Psoas muscle (tissue), 8 donors: ENCODE measurements at regions of chr1 and their contacts with region 1.

Region 1: DNA sequence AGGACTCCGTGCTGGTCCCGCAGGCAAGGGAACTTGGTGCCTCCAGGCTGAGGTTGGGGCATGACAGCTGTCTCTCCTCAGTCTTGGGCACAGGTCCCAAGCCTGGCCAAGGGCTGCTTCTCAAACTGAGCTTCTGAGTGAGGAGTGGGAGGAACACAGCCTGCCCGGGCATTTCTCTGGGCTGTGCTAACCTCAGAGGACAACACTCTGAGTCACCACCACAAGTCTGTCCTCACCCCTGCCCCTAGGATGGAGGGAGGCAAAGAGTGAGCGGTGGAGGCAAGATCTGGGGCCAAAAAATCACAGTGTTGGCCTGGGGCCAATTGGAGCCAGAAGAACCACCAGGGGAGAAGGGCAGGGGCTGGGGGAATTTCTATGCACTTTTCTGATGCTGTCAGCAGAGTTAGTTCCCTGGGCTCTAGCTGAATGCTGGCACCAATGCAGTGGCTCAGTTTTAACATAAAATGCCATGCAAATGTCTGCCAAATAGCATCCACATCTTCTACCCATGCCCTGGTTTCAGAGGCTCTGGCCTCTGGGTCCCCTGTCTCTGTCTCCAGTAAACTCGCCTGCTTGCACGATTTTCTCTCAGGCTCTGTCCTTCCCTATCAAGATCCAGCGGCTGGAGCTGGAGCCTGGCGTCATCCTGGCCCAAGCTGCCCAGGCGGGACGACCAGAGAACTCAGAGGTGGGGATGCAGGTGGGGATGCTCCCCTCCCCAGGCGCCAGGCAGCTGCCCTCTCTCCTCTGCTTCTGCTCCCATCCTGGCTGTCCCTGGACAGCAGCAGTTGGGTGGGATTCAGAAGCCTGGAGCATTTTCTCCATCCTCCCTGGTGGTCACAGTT is 11.0 kb upstream of the CDK18 start:
- DNase-seq: no peak
- ATAC-seq: peak; percentile 54 to 69 (median 62)
- H3K4me3 ChIP-seq: no peak overlapping the region
- H3K27ac ChIP-seq: no peak overlapping the region
- H3K4me1 ChIP-seq: peaks cover 13% of the 10 kb centered on the region
- H3K27me3 ChIP-seq: peaks cover 0 to 7% (median 0%) of the 10 kb centered on the region in 3 donors
- CTCF ChIP-seq: no peak

Region 2: DNA sequence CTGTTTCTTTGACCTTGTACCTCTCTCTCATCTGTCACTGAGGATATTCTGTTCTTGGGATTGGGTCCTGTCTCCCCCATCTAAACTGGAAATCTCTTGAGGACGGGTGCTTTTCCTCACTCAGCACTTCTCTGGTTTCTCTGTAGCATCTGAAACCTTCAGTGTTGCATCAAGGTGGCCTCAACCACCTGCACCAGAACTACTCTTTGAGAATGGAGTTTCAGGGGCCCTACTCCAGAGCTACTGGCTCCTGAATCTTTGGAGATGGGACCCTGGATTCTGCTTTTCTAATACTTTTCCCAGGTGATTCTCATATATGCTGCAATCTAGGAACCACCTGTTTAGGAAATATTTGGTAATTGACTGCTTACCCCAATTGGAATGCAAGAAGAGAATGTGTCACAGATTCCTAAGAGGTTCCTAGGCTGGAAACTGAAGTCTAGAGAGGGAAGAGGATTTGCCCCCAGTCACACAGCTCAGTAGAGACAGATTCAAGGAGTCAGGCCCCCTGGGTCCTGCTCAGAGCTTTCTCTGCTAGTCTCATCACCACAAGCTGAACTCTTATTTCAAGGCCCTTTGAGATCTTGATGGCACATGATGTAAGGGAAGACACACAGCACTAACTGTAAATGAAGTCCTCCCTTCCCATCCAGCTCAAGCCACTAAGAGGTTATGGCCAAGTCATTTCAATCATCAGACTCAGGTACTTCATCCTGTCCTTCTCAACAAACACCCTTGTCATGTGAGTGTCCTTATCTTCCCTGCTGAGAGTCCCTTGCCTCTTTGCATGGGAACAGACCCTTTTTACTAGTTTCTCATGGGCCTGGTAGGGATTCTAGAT is 1070.1 kb after region 1 on chr1:
- intact Hi-C with region 1: loop called in 1 of 2 experiments (anchors 10 kb)
- DNase-seq: no peak
- ATAC-seq: no peak
- H3K4me3 ChIP-seq: no peak overlapping the region
- H3K27ac ChIP-seq: no peak overlapping the region
- H3K4me1 ChIP-seq: peaks cover 17% of the 10 kb centered on the region
- H3K27me3 ChIP-seq: no peaks in the 10 kb centered on the region
- CTCF ChIP-seq: no peak